ENCODE measurements at regions of chr19 and their contacts with region 1.

Region 1: DNA sequence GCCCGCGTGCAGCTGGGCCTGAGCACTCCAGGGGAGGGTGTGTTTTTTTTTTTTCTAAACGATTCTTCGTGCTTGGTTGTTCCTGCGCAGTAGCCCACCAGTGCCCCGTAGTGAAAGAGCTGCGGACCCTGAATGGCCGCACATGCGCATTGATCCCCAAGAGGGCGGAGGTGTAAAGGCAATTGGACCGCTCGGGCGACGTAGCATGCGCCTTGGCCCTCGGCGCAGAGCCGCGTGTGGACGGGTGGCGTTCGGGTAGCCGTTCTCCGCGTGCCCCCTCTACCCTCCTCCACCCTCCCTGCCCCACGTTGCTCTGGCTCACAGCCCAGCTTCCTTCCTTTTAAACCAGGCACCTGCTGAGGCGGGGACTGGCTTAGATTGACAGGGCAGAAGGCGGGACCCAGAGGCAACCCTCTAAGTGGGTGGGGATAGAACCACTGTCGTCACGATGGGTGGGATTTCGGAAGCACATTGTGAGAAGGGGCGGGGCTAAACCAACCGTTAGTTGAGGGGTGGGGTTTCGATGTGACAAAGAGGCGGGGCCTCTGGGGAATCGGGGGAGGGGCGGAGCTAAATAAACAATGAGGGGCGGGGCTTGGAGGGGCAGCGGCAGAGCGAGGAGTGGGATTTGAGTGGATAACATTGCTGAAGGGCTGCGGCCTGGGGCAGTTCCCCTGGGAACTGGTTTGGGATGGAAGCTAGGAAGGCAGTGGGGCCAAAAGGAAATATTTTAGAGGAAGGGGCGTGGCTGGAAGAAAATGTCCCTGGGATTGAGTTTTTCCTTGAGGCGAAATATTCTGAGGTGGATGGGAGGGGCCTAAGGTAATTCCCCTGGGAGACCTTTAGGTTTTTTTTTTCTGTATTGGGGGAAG is 543 bp upstream of the NUP62 start:
- ATAC-seq: peak; percentile 77 to 87 (median 83)
- H3K4me3 ChIP-seq: peak overlapping the region; percentile 73 to 98 (median 80)
- H3K27ac ChIP-seq: peak overlapping the region; percentile 97 to 98
- H3K4me1 ChIP-seq: peaks cover 20 to 25% of the 10 kb centered on the region in 2 donors

Region 2: DNA sequence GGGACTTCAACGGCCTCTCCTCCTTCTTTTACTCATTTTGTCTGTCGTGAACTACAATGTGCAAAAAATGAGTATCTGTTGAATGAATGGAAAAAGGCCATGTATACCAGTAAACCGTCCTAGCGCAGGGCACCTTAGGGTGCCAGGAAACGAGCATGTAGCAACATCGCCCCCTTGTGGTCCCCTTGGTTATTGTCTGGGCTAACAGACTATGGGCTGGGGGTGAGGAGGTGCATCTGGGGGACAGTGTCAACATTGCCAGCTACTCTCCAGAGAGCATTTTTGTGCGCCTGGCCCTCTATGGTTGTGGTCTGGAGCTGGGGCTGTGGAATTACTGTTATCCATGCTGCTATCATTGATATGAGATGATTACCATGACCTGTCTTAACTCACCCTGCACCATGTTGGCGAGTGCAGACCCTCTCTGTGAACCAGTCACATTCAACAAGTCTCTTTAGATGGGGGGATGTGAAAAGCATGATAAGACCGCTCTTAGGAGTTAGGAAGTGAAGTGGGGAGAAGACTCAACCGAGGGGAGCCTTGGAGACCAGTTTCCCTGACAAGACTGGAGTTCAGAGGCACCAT is 53.9 kb after region 1 on chr19:
- in situ Hi-C with region 1: loop called in 1 of 9 experiments (anchors 10 kb)
- ATAC-seq: peak in 7 of 8 experiments; percentile 8 to 70 (median 67)
- H3K4me3 ChIP-seq: no peak overlapping the region
- H3K27ac ChIP-seq: no peak overlapping the region
- H3K4me1 ChIP-seq: no peaks in the 10 kb centered on the region

Region 3: DNA sequence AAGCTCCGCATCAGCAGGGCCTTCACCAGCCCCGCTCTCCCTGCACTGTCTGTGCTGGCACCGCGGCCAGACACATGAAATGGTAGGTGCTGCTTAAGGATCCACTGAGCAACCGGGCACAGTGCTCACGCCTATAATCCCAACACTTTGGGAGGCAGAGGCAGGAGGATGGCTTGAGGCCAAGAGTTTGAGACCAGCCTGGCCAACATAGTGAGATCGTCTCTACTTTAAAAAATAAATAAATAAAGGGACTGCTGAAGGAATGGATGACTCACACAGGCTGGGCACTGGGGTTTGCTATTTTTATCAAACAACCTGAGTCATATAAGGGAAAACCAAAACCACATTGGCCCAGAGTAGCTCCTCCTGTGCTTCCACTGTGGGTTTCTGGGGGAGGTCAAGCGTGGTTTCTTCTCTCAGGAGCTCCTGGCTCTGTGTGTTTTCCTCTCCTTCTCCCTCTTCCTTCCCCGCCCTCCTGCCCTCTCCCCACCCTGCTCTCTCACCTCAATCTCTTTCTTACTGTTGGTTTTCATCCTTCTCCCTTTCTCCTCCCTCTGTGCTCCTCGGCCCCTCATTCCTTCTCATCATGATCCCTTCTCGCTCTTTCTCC is 74.1 kb after region 1 on chr19:
- in situ Hi-C with region 1: no loop called
- ATAC-seq: peak; percentile 35 to 98 (median 52)
- H3K4me3 ChIP-seq: no peak overlapping the region
- H3K27ac ChIP-seq: no peak overlapping the region
- H3K4me1 ChIP-seq: no peaks in the 10 kb centered on the region

Region 4: DNA sequence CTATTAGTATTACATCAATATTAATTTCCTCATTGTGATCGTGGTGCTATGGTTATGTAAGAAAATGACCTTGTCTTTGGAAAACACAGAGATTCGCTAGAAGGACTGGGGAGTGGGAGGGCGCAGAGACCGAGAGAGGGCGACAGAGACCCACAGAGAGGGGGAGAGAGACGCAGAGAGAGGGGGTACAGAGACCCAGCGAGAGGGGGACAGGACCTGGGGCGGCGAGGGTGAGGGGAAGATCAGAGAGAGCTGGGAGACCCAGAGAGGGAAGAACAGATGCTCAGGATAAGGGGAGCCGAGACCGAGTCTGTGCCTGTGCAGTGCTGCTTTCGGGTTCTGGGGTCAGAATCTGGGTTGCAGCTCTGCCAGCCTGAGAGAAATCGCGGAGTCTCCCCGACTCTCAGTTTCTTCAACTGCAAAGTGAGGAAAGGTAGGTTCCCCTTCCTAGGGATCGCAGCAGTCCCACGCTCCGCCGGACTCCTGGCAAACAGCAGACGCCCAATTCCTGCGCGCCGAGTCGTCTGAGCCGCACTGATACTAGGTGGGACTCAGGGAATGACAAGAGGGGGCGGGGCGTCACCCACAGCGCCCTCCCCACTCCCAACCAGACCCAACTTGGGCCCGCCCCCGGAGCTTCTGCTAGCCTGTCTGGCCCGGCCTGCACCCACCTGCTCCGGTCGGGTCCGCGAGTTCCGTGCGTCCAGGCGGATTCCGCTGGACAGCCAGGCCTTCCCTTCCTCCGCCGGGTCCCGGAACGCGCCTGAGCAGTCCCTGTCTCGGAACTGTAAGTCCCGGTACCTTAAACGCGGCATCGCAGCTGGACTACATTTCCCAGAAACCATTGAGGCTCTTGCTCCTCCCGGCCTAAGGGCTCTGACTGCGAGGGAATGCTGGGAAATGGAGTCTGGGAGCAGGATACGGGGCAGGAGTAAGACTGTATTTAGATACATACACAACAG is 217.9 kb after region 1 on chr19:
- in situ Hi-C with region 1: loop called in 2 of 9 experiments (anchors 25 kb)
- ATAC-seq: peak in 6 of 8 experiments; percentile 81 to 96 (median 94)
- H3K4me3 ChIP-seq: peak overlapping the region in 3 of 5 donors; percentile 42 to 68 (median 66)
- H3K27ac ChIP-seq: no peak overlapping the region
- H3K4me1 ChIP-seq: no peaks in the 10 kb centered on the region

Region 5: GRCh38 chr19:50556282-50557008 is 626.6 kb after region 1 on chr19:
- in situ Hi-C with region 1: no loop called
- ATAC-seq: peak; percentile 75 to 96 (median 84)
- H3K4me3 ChIP-seq: peak overlapping the region; percentile 2 to 35 (median 19)
- H3K27ac ChIP-seq: peak overlapping the region; percentile 66 to 76
- H3K4me1 ChIP-seq: peaks cover 17 to 24% of the 10 kb centered on the region in 2 donors

Measured in motor neuron (in vitro differentiated cells).